Right ventricle myocardium inferior (tissue), 1 donor: ENCODE measurements at regions of chr3 and their contacts with region 1.

Region 1: GRCh38 chr3:171838218-171838761 is 4.9 kb upstream of the TMEM212 start:
- DNase-seq: peak; percentile 68
- ATAC-seq: peak; percentile 87

Region 2: GRCh38 chr3:172341482-172342059 is 503.3 kb after region 1 on chr3:
- intact Hi-C with region 1: loop called (anchors 5 kb)
- DNase-seq: no peak
- ATAC-seq: peak; percentile 55